HepG2 (cell line): ENCODE measurements at regions of chr12 and their contacts with region 1.

Region 1: GRCh38 chr12:17866802-17867201 is 223.2 kb downstream of the RERGL start:
- DNase-seq: no peak
- ATAC-seq: no peak
- H3K4me3 ChIP-seq: no peak overlapping the region
- H3K27ac ChIP-seq: no peak overlapping the region
- H3K4me1 ChIP-seq: no peaks in the 10 kb centered on the region
- H3K27me3 ChIP-seq: no peaks in the 10 kb centered on the region
- CTCF ChIP-seq: no peak
- EP300 ChIP-seq: no peak
- POLR2A ChIP-seq: no peak
- RAD21 ChIP-seq: no peak

Region 2: GRCh38 chr12:17169726-17170471 is 696.9 kb before region 1 on chr12:
- CTCF ChIA-PET with region 1: no interaction called
- POLR2A ChIA-PET with region 1: no interaction called
- in situ Hi-C with region 1: no loop called
- intact Hi-C with region 1: no loop called
- DNase-seq: no peak
- ATAC-seq: no peak
- H3K4me3 ChIP-seq: no peak overlapping the region
- H3K27ac ChIP-seq: no peak overlapping the region
- H3K4me1 ChIP-seq: no peaks in the 10 kb centered on the region
- H3K27me3 ChIP-seq: no peaks in the 10 kb centered on the region
- CTCF ChIP-seq: no peak
- EP300 ChIP-seq: no peak
- POLR2A ChIP-seq: no peak
- RAD21 ChIP-seq: no peak

Region 3: GRCh38 chr12:17778242-17778641 is 88.6 kb before region 1 on chr12:
- CTCF ChIA-PET with region 1: no interaction called
- POLR2A ChIA-PET with region 1: no interaction called
- in situ Hi-C with region 1: no loop called
- intact Hi-C with region 1: loop called (anchors 5 kb)
- DNase-seq: no peak
- ATAC-seq: no peak
- H3K4me3 ChIP-seq: no peak overlapping the region
- H3K27ac ChIP-seq: no peak overlapping the region
- H3K4me1 ChIP-seq: no peaks in the 10 kb centered on the region
- H3K27me3 ChIP-seq: no peaks in the 10 kb centered on the region
- CTCF ChIP-seq: no peak
- EP300 ChIP-seq: no peak
- POLR2A ChIP-seq: no peak
- RAD21 ChIP-seq: no peak

Region 4: DNA sequence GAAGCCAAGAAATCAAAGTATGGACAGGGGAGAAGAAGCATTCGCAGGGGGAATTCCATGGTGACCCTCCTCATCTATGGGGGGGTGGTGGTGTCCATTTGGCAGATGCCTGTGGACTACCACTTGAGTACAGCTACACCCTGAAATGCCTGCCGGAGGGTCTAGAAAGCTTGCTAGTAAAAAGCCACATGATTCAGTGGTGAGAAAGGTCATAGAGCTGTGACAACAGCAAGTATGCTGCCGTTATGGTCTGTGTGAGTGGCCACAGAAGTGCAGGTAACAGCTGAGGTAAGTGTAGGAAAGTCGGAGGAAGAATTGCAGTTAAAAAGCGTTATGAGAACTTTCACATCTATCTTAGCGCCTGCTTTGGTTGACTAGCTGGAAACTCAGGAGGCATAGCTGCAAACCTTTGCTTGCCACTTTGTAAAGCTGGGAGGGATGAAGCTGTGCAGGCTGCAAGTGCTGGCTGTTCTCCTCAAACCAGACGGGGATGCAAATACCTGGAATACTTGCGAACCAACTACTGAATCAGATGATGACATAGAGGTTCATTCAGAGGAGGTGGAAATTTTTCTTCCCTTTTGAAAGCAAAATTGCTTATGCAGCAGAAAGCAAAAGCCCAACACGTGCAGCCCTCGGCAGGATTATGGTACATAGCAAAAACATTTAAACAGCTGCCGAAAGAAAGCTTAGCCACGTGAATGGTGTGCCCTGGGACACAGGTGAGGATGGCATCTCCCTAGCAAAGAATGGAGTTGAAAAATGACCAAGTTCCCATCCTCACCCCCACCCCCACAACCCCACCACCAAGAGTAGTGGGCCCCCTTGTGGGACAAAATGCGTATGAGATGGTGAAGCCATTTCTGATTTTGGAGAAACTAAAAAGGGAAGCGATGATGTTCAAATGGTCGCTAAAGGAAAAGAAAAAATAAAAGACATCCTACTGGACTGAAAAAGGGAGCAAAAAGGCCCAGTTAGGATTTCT is 63.9 kb before region 1 on chr12:
- CTCF ChIA-PET with region 1: no interaction called
- POLR2A ChIA-PET with region 1: no interaction called
- in situ Hi-C with region 1: no loop called
- intact Hi-C with region 1: no loop called
- DNase-seq: no peak
- ATAC-seq: no peak
- H3K4me3 ChIP-seq: no peak overlapping the region
- H3K27ac ChIP-seq: no peak overlapping the region
- H3K4me1 ChIP-seq: no peaks in the 10 kb centered on the region
- H3K27me3 ChIP-seq: no peaks in the 10 kb centered on the region
- CTCF ChIP-seq: no peak
- EP300 ChIP-seq: no peak
- POLR2A ChIP-seq: no peak
- RAD21 ChIP-seq: no peak